ENCODE measurements at regions of chr11 and their contacts with region 1.

Region 1: GRCh38 chr11:44702889-44703288 is 23.9 kb upstream of the TSPAN18 start:
- DNase-seq: no peak

Region 2: GRCh38 chr11:44634401-44635281 is 68.2 kb before region 1 on chr11:
- intact Hi-C with region 1: loop called (anchors 5 kb)
- DNase-seq: peak; percentile 85

Region 3: DNA sequence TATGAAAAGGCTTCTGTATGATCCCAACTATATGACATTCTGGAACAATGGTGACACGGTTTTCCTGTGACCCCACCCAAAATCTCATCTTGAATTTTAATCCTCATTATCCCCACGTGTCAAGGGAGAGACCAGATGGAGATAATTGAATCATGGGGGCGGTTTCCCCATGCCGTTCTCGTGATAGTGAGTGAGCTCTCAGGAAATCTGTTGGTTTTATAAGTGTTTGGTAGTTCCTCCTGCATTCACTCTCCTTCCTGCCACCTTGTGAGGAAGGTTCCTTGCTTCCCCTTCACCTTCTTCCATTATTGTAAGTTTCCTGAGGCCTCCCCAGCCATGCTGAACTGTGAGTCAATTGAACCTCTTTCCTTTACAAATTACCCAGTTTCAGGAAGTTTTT is 29.2 kb before region 1 on chr11:
- intact Hi-C with region 1: no loop called
- DNase-seq: no peak

Measured in cardiac septum (tissue), 1 donor.